ENCODE measurements at regions of chr9 and their contacts with region 1.

Region 1: GRCh38 chr9:124040935-124041816 is 29.6 kb downstream of the LHX2 start:
- DNase-seq: no peak
- H3K4me3 ChIP-seq: peak overlapping the region; percentile 36
- H3K27ac ChIP-seq: no peak overlapping the region
- H3K27me3 ChIP-seq: peaks cover 77% of the 10 kb centered on the region
- CTCF ChIP-seq: peak; percentile 74

Region 2: GRCh38 chr9:123401879-123402513 is 639.2 kb before region 1 on chr9:
- CTCF ChIA-PET with region 1: interaction called, 16 read pairs
- POLR2A ChIA-PET with region 1: no interaction called
- DNase-seq: peak; percentile 27
- H3K4me3 ChIP-seq: no peak overlapping the region
- H3K27ac ChIP-seq: no peak overlapping the region
- H3K27me3 ChIP-seq: no peaks in the 10 kb centered on the region
- CTCF ChIP-seq: peak; percentile 93

Region 3: GRCh38 chr9:123544007-123544827 is 497.0 kb before region 1 on chr9:
- CTCF ChIA-PET with region 1: interaction called, 63 read pairs
- POLR2A ChIA-PET with region 1: no interaction called
- DNase-seq: no peak
- H3K4me3 ChIP-seq: no peak overlapping the region
- H3K27ac ChIP-seq: no peak overlapping the region
- H3K27me3 ChIP-seq: no peaks in the 10 kb centered on the region
- CTCF ChIP-seq: peak; percentile 94

Region 4: DNA sequence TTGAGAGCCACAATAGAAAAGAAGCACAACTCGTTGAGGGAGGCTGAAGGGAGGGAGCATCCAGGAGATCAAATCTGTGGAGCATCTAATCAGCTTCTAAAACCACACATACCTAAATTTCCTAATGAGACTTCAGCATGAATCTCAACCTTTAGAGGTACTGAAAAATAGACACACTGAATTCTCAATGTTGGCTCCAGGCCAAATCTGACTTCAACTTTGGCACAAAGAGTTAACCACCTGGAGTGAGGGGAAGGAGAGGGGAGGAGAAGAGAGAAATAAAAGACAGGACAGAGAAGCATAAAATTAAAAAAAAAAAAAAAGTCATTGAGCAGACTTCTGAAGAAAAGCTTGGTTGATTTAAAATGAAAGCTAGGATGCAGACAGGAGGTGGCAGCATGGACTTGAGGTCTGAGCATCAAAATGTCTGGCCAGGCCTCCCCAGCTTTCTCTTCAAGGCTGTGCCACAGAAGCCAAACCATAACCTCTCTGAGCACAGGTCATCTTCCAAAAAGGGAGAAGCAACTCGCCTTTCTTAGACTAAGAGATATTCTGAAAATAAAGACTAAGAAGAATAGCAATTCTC is 316.9 kb before region 1 on chr9:
- CTCF ChIA-PET with region 1: interaction called, 10 read pairs
- POLR2A ChIA-PET with region 1: no interaction called
- DNase-seq: no peak
- H3K4me3 ChIP-seq: no peak overlapping the region
- H3K27ac ChIP-seq: no peak overlapping the region
- H3K27me3 ChIP-seq: no peaks in the 10 kb centered on the region
- CTCF ChIP-seq: peak; percentile 23

Region 5: GRCh38 chr9:124030969-124031451 is 10.2 kb before region 1 on chr9:
- CTCF ChIA-PET with region 1: no interaction called
- POLR2A ChIA-PET with region 1: no interaction called
- DNase-seq: no peak
- H3K4me3 ChIP-seq: no peak overlapping the region
- H3K27ac ChIP-seq: no peak overlapping the region
- H3K27me3 ChIP-seq: peaks cover 65% of the 10 kb centered on the region
- CTCF ChIP-seq: no peak

Region 6: DNA sequence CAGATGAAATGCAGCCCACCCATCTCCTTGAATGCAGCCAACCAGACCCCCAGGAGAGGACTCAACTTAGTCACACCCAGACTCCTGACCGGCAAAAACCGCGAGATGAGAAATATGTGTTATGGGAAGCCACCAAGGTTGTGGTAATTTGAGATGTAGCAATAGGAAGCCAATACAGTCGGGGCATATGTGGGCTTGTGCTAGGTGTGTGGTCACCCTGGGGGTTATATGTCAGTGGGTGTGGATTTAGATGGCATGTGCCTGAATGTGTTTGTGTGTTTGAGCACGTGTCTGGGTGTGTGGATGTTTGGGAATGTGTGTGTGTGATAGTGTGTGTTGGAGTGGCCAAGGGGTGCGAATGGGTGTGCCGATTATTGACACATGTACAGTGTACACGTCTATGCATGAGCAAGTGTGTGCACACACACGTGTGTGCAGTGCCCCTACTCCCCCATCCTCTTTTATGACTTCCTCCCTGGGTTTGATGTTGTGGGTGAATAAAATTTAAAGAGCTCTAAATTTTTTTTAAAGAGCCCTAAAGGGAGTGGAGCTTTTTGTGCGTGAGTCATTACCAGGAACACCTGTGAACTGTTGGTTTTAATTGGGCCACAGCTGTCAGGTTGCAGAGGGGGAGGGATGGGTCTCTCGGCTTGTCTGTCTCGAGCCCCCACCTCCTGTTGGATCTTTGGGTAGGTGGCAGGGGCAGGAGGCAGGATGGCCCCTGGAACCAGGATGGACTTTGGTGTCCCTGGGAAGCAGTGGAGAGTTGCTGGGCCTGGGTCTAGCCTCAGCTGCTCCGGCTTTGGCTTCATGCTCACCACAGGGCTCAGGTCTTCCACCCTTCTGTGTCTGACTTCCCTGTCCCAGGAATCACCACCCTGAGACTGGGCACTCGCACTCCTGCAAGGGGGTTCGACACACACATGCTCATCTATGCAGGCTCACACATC is 57.2 kb after region 1 on chr9:
- CTCF ChIA-PET with region 1: no interaction called
- POLR2A ChIA-PET with region 1: no interaction called
- DNase-seq: no peak
- H3K4me3 ChIP-seq: no peak overlapping the region
- H3K27ac ChIP-seq: no peak overlapping the region
- H3K27me3 ChIP-seq: peaks cover 31% of the 10 kb centered on the region
- CTCF ChIP-seq: no peak